Heart right ventricle (tissue), 16 donors: ENCODE measurements at regions of chr9 and their contacts with region 1.

Region 1: DNA sequence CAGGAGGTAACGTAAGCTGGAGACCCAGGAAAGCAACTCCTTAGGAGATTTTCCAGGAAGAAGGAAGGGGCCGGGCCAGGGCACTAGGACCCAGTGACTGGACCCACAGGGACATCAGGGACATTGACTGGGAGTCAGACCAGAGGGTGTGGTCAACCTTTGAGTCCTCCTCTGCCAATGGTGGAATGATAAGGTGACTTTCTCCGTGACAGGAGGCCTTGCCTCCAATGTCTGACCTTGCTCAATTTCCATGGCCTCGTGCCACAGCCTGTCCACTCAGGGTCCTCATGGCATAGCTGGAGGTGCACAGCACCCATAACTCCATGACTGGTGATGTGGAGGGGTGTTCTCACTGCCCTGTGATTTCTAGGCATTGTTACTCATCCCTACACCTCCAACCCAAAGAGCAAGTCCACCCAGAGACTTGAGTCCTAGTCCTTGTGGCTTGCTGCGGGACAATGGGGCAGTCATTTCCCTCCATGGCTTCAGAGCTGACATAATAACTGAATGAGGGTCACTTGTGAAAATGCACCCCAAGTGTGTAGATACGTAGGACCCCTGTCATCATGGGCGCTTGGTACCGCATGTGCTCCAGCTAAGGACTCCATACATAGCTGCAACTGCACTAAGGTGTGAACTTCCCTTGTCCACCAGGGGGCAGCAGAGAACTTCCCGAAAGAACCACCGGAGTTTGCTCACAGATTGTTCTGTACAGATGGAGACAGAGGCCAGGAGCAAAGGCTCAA is 4.1 kb upstream of the AMBP start:
- DNase-seq: peak; percentile 74 to 88
- ATAC-seq: peak; percentile 86 to 96 (median 92)
- H3K4me3 ChIP-seq: no peak overlapping the region
- H3K27ac ChIP-seq: no peak overlapping the region
- H3K4me1 ChIP-seq: peaks cover 0 to 5% (median 0%) of the 10 kb centered on the region in 9 donors
- H3K27me3 ChIP-seq: peaks cover 0 to 26% (median 8%) of the 10 kb centered on the region in 7 donors
- CTCF ChIP-seq: peak; percentile 84 to 94 (median 89)

Region 2: DNA sequence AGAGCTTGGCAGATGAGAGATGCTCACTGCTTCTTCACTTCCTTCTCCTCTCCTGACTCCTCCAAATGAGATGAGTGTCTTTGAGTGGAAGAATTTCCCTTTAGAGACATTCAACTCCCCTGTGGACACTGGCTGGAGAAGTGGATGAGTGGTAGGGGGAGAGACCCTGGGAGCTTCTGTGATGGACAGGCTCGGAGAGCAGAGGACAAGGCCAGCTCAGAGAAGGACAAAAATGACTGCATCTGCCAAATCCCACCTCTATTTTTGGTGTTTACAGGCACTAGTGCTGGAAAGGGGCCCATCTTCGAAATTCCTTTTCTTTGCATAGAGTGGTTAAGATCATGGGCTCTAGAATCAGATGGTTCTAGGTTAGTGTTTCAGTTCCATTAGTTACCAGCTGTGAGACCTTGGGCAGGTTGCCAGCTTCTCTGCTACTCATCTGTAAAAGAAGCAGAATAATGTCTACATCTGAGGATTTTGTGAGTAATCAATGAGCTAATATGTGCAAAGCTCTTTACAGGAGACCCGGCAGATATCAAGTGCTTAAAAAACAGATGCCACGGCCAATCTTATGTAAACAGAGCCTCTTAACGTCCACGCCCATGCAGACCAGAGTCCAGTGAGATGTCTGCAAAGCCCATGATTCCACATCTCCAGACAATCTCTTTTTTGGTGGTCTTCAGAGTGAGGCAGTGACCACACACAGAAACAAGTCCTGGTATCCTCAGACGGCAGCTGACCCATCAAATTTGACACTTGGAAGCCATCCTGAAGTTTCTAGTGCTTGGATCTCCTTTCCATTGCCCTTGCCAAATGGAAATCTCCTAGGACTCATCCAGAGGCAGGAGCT is 59.6 kb after region 1 on chr9:
- intact Hi-C with region 1: no loop called
- DNase-seq: peak in 1 of 2 donors; percentile 28
- ATAC-seq: peak in 7 of 8 donors; percentile 19 to 53 (median 29)
- H3K4me3 ChIP-seq: no peak overlapping the region
- H3K27ac ChIP-seq: peak overlapping the region in 4 of 10 donors; percentile 26 to 68 (median 49)
- H3K4me1 ChIP-seq: peaks cover 7 to 41% (median 27%) of the 10 kb centered on the region in 9 donors
- H3K27me3 ChIP-seq: no peaks in the 10 kb centered on the region
- CTCF ChIP-seq: no peak

Region 3: DNA sequence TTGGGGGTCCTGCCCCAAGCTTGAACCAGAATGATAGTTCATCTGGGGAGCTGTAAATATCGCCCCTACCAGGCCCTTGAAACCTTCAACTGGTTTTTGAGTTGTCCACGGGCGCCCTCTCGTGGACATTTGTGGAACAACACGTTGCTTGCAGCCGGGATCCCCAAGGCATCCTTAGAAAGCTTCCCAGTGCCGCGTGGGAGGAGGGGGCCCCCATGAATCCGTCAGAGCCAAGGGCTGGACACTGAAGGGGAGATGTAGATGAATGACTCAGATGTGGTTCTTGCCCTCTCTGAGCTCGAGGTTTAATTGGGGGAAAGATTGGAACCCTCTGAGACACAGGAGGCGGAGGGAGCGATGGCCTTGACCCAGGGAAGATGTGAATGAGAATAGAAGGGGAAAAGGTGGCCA is 208.9 kb after region 1 on chr9:
- intact Hi-C with region 1: loop called (anchors 1 to 5 kb)
- DNase-seq: peak; percentile 62 to 76
- ATAC-seq: peak; percentile 12 to 67 (median 48)
- H3K4me3 ChIP-seq: no peak overlapping the region
- H3K27ac ChIP-seq: no peak overlapping the region
- H3K4me1 ChIP-seq: no peaks in the 10 kb centered on the region
- H3K27me3 ChIP-seq: no peaks in the 10 kb centered on the region
- CTCF ChIP-seq: peak; percentile 87 to 96 (median 95)

Region 4: DNA sequence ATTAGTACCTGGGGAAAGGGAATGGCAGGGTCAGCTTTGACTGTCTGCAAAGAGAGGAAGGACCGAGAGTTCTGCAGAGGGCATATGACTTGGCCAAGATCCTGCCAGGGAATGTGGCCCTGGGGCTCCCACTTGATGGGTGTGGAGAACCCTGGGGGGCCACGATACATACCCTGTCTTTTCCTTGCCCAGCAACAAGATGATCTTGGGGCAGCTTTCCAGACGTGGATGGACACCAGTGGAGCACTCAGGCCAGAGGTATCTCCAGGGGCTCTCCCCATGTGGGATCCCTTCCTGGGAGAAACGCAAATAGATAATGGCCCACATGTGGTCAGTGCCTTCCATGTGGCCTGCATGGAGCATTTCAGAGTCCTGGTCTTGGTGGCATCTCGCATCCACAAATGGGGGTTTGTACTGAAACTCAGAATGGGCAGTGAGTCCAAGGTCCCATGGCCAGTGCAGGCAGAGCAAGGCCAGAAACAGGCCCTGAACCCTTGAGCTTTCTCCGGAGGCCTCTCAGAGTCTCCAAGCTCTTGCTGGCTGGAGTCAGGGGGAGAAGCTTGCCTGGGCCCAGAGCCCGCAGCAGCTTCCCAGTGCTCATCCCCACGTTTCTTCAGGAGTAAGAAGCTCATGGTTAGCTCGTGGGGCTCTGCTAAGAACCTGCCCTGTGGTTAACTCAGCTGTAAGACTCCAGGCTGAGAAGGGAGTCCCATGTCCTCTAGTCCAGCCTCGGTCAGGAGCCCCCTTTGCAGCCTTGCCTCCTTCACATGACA is 222.4 kb after region 1 on chr9:
- intact Hi-C with region 1: no loop called
- DNase-seq: no peak
- ATAC-seq: no peak
- H3K4me3 ChIP-seq: no peak overlapping the region
- H3K27ac ChIP-seq: no peak overlapping the region
- H3K4me1 ChIP-seq: peaks cover 0 to 10% (median 5%) of the 10 kb centered on the region in 9 donors
- H3K27me3 ChIP-seq: no peaks in the 10 kb centered on the region
- CTCF ChIP-seq: no peak